OCI-LY7 (cell line): ENCODE measurements at regions of chr4 and their contacts with region 1.

Region 1: GRCh38 chr4:38782452-38783108 is at the start of gene TLR10:
- DNase-seq: peak; percentile 95
- H3K4me3 ChIP-seq: peak within 1 kb of the TSS; percentile 75
- H3K27ac ChIP-seq: peak within 1 kb of the TSS; percentile 90
- H3K4me1 ChIP-seq: peaks cover 37% of the 10 kb centered on the region
- CTCF ChIP-seq: peak; percentile 84
- total RNA-seq, gene TLR10: 34.5 and 39.8 TPM in 2 replicates

Region 2: GRCh38 chr4:38759113-38759789 is 23.3 kb before region 1 on chr4:
- CTCF ChIA-PET with region 1: interaction called, 145 read pairs
- POLR2A ChIA-PET with region 1: interaction called, 348 read pairs
- intact Hi-C with region 1: loop called (anchors 1 kb)
- DNase-seq: peak; percentile 83
- H3K4me3 ChIP-seq: peak overlapping the region; percentile 18
- H3K27ac ChIP-seq: peak overlapping the region; percentile 99
- H3K4me1 ChIP-seq: peaks cover 63% of the 10 kb centered on the region
- CTCF ChIP-seq: peak; percentile 95

Region 3: GRCh38 chr4:38768968-38769394 is 13.6 kb before region 1 on chr4:
- CTCF ChIA-PET with region 1: interaction called, 145 read pairs
- POLR2A ChIA-PET with region 1: interaction called, 348 read pairs
- intact Hi-C with region 1: no loop called
- DNase-seq: no peak
- H3K4me3 ChIP-seq: no peak overlapping the region
- H3K27ac ChIP-seq: no peak overlapping the region
- H3K4me1 ChIP-seq: peaks cover 23% of the 10 kb centered on the region
- CTCF ChIP-seq: no peak

Region 4: GRCh38 chr4:38795087-38795486 is 12.5 kb after region 1 on chr4:
- CTCF ChIA-PET with region 1: no interaction called
- POLR2A ChIA-PET with region 1: interaction called, 11 read pairs
- intact Hi-C with region 1: no loop called
- DNase-seq: no peak
- H3K4me3 ChIP-seq: no peak overlapping the region
- H3K27ac ChIP-seq: no peak overlapping the region
- H3K4me1 ChIP-seq: no peaks in the 10 kb centered on the region
- CTCF ChIP-seq: no peak

Region 5: DNA sequence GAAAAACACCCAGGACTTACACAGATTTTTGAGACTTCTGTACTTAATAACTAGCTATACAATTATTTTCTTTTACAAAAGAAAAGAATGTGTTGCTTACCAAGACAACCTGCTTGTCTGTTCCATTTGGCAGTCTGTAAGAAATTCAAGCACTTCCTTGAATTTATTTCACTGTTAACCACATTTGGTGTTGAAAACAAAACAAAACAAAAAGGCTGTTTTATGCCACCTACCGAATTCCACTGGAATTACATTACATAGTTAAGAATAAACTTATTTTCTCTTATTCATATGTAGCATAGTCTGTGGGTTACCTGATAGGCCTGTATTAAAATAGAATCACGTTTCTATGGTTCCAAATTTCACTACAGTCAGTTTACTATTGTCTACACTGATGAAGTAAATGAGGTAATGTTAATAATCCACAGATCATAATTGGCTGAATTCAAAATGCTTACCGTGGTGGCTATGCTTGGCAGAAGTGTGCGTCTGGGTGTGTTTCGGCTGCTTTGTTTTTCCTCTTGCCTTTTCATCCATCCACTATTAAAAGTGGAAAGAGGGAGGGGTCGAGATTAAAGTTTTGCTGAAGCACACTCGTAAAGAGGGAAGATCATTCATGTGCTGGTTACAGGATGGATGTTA is 22.2 kb after region 1 on chr4 and contains the start of gene TLR1:
- CTCF ChIA-PET with region 1: interaction called, 13 read pairs
- POLR2A ChIA-PET with region 1: interaction called, 43 read pairs
- intact Hi-C with region 1: loop called (anchors 1 kb)
- DNase-seq: peak; percentile 72
- H3K4me3 ChIP-seq: peak within 1 kb of the TSS; percentile 62
- H3K27ac ChIP-seq: peak within 1 kb of the TSS; percentile 96
- H3K4me1 ChIP-seq: peaks cover 26% of the 10 kb centered on the region
- CTCF ChIP-seq: peak; percentile 85
- total RNA-seq, gene TLR1: 3.3 and 3.8 TPM in 2 replicates

Region 6: GRCh38 chr4:38856524-38857337 is 74.2 kb after region 1 on chr4 and contains the start of gene TLR6:
- CTCF ChIA-PET with region 1: interaction called, 4 read pairs
- POLR2A ChIA-PET with region 1: interaction called, 32 read pairs
- intact Hi-C with region 1: loop called (anchors 1 kb)
- DNase-seq: peak; percentile 88
- H3K4me3 ChIP-seq: peak within 1 kb of the TSS; percentile 71
- H3K27ac ChIP-seq: peak within 1 kb of the TSS; percentile 77
- H3K4me1 ChIP-seq: peaks cover 51% of the 10 kb centered on the region
- CTCF ChIP-seq: peak; percentile 96
- total RNA-seq, gene TLR6: 1.5 TPM in 2 replicates